K562 (cell line): ENCODE measurements at regions of chr7 and their contacts with region 1.

Region 1: DNA sequence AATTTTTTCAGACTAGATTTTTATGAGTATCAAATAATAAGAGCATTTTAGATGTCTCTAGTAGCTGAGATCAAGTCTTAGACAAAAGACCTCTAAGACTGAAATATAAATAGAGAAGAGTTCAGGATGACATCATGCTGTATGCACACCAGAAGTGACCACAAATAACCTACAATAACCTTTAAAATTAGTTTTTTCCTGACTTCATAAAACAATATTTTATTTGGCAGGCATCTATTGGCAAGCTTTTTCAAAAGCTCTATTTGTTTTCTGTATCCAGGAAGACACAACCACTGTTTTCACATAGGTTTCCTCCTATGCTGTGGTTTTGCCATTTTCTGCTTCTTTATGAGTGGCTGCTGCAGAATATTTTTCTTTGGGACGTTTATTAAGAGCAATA is 359.1 kb downstream of the CRPPA start:
- DNase-seq: no peak
- ATAC-seq: no peak
- H3K4me3 ChIP-seq: no peak overlapping the region
- H3K27ac ChIP-seq: no peak overlapping the region
- H3K4me1 ChIP-seq: no peaks in the 10 kb centered on the region
- H3K27me3 ChIP-seq: no peaks in the 10 kb centered on the region
- CTCF ChIP-seq: no peak
- EP300 ChIP-seq: no peak
- POLR2A ChIP-seq: no peak
- RAD21 ChIP-seq: no peak

Region 2: GRCh38 chr7:15602236-15602635 is 460.0 kb before region 1 on chr7:
- CTCF ChIA-PET with region 1: no interaction called
- POLR2A ChIA-PET with region 1: no interaction called
- in situ Hi-C with region 1: no loop called
- intact Hi-C with region 1: loop called (anchors 10 kb)
- DNase-seq: no peak
- ATAC-seq: no peak
- H3K4me3 ChIP-seq: no peak overlapping the region
- H3K27ac ChIP-seq: no peak overlapping the region
- H3K4me1 ChIP-seq: no peaks in the 10 kb centered on the region
- H3K27me3 ChIP-seq: no peaks in the 10 kb centered on the region
- CTCF ChIP-seq: no peak
- EP300 ChIP-seq: no peak
- POLR2A ChIP-seq: no peak
- RAD21 ChIP-seq: no peak